Mammary epithelial cell (primary cell): ENCODE measurements at regions of chr1 and their contacts with region 1.

Region 1: DNA sequence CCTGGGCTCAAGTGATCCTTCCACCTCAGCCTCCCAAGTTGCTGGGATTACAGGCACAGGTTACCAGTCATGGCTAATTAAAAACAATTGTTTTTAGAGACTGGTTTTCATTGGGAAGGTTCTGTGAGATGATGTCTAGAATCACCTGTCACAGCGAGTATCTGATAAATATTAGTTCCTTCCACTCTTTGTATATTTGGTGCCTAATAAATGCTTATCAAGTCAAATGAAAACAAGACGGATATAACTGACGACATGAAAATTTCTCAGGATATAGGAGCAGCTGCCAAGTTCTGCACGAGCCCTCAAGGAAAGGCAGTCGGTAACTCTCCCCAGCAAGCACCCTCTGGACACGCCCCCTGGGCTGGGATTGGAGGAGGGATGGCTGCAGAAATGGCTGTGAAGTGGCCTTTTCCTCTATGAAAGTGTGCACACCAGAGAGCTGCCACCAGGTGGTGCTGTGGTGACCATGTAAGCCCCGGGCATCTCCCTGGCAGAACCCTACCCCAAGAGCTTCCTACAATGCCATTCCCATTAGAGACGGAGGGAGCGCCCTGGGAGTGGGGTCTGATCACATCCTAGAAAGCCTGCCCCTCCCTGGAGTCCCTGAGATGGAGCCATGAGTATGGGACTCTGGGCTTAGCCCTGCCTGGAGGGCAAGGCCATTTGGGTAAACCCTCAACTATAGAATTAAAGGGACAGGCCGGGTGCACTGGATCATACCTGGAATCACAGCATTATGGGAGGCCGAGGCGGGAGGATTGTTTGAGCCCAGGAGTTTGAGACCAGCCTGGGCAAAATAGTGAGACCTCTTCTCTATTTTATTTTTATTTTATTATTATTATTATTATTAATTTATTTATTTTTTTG is 50.9 kb downstream of the HTR6 start:
- DNase-seq: peak; percentile 85
- H3K4me3 ChIP-seq: no peak overlapping the region
- H3K27ac ChIP-seq: no peak overlapping the region
- H3K4me1 ChIP-seq: no peaks in the 10 kb centered on the region
- H3K27me3 ChIP-seq: no peaks in the 10 kb centered on the region
- CTCF ChIP-seq: peak; percentile 84 to 95

Region 2: GRCh38 chr1:19799877-19800804 is 84.6 kb after region 1 on chr1 and contains the start of gene TMCO4:
- CTCF ChIA-PET with region 1: no interaction called
- dilution Hi-C with region 1: no loop called
- in situ Hi-C with region 1: no loop called
- intact Hi-C with region 1: loop called (anchors 1 kb)
- DNase-seq: peak; percentile 50
- H3K4me3 ChIP-seq: peak within 1 kb of the TSS; percentile 54 to 73 (median 62)
- H3K27ac ChIP-seq: no peak within 1 kb of the TSS
- H3K4me1 ChIP-seq: peaks cover 4% of the 10 kb centered on the region
- H3K27me3 ChIP-seq: no peaks in the 10 kb centered on the region
- CTCF ChIP-seq: no peak
- total RNA-seq, gene TMCO4: 5.7 to 16.2 TPM